ENCODE measurements at regions of chr17 and their contacts with region 1.

Region 1: GRCh38 chr17:69523244-69523861 is 108.9 kb downstream of the MAP2K6 start:
- DNase-seq: peak; percentile 39
- CTCF ChIP-seq: peak; percentile 43

Region 2: GRCh38 chr17:69358688-69359596 is 164.4 kb before region 1 on chr17:
- CTCF ChIA-PET with region 1: interaction called, 10 read pairs
- POLR2A ChIA-PET with region 1: no interaction called
- DNase-seq: no peak
- CTCF ChIP-seq: peak; percentile 32

Region 3: GRCh38 chr17:69388822-69389442 is 134.4 kb before region 1 on chr17:
- CTCF ChIA-PET with region 1: no interaction called
- POLR2A ChIA-PET with region 1: no interaction called
- DNase-seq: no peak
- CTCF ChIP-seq: no peak

Region 4: GRCh38 chr17:69414408-69415274 is 108.7 kb before region 1 on chr17 and contains the start of gene MAP2K6:
- CTCF ChIA-PET with region 1: interaction called, 10 read pairs
- POLR2A ChIA-PET with region 1: no interaction called
- DNase-seq: peak; percentile 81
- CTCF ChIP-seq: no peak

Region 5: GRCh38 chr17:69485901-69486643 is 37.3 kb before region 1 on chr17:
- CTCF ChIA-PET with region 1: no interaction called
- POLR2A ChIA-PET with region 1: no interaction called
- DNase-seq: no peak
- CTCF ChIP-seq: no peak

Region 6: GRCh38 chr17:69501591-69502468 is 21.5 kb before region 1 on chr17:
- CTCF ChIA-PET with region 1: interaction called, 113 read pairs
- POLR2A ChIA-PET with region 1: no interaction called
- DNase-seq: peak; percentile 24
- CTCF ChIP-seq: no peak

Region 7: DNA sequence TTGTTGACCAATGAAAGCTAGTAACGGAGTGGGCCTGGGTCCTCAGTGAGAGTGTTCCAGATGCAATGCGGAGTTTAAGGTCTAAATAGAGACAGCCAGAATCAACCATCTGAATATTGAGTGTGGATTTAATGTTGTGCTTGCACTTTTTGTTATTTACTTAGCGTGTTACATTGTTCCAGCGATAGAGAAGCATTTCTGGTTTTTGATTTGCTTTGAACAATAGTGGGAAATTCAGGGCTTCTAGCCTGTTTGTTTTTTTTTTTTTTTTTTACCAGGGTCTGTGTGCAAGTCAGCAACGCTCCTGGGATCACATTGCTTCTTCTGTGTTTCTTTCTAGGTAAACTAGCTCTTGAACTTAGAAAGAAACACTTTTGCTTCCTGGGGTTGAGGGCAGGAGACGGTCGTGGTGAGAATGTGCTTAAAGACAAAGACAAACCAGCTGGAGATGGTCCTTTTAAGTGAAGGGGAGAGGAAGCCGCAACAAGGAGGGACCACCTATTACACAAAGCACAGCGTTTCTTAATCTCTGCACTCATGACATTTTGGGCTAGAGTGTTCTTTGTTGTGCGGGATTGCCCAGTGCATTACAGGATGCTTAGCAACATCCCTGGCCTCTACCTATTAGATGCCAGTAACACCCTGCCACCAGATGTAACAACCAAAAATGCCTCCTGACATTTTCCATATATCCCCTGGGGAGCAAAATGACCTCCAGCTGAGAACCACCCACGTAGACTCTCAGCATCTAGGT is 10.3 kb after region 1 on chr17:
- CTCF ChIA-PET with region 1: interaction called, 49 read pairs
- POLR2A ChIA-PET with region 1: no interaction called
- DNase-seq: no peak
- CTCF ChIP-seq: no peak

Region 8: DNA sequence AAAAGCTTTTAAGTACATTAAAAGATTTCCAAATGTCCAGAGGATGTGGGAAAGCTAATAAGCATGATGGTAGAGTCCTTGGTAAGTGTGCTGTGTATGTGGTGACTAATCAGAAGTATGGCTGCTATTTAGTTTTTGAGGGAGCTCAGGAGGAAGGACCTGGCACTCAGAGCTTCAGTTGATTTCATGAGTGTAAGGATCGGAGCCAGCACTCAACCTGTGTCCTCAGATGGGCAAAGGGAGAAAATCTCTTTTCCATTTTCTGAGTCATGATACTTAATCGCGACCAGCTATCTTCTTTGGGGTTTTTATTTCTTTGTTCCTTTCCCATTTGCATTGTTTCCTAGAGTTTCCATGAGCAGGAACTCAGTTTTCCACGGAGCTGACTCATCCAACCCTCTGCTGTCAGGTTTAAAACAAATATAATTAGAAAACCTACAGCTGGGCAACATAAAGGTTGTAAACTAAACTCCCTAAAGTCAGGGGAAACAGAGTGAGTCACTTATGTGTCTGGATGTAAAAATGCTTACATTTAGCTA is 16.5 kb after region 1 on chr17:
- CTCF ChIA-PET with region 1: interaction called, 49 read pairs
- POLR2A ChIA-PET with region 1: no interaction called
- DNase-seq: no peak
- CTCF ChIP-seq: no peak

Region 9: GRCh38 chr17:69669441-69670178 is 146.3 kb after region 1 on chr17:
- CTCF ChIA-PET with region 1: no interaction called
- POLR2A ChIA-PET with region 1: no interaction called
- DNase-seq: no peak
- CTCF ChIP-seq: no peak

Region 10: DNA sequence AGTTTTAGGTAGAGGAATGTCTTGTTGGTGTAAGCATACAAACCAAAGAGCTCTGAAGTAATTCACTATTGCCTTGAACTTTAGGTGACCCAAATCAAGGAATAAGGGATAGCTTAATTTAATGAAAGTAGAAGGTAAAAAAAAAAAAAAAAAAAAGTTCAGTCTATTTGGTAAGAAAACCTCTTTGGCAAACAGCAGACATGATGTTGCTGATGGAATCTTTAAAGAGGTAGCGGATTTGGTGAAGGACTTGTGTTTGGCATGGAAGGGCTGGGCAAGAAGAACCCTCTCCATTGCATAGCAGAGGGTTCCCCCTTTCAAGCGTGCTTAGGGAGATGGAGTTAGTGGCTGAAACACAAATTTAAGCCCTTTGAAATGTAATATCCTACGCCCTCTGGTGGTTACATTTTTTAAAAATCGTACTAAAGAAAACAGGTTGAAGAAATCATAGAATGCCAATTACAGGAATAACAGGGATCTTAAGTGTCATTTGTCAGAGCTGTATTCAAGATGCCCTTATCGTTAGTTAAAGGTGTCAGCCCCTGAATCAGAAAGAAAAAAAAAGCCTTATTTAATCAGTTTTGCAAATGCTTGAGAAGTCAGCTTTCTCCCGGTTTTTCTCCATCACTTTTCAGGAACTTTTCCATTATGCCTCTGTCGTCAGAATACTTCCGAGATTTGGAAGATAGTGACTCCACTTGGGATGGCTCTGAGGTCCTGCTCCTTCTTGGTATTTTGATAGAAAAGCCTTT is 1029.1 kb after region 1 on chr17:
- CTCF ChIA-PET with region 1: interaction called, 25 read pairs
- POLR2A ChIA-PET with region 1: no interaction called
- DNase-seq: peak; percentile 41
- CTCF ChIP-seq: peak; percentile 44

Measured in GM10248 (cell line).